Activated T-helper 1 cell treated with anti-CD3 and anti-CD28 coated beads, Interleukin-12 subunit alpha, Interleukin-12 subunit beta, Interleukin-2, Interleukin-4 antibody, amounts not matched to agents 30 ng/mL and 10 ng/mL and 1 ng/mL, durations not matched to agents 14 hours and 24 hours and 36 hours (primary cell): ENCODE measurements at regions of chr2 and their contacts with region 1.

Region 1: DNA sequence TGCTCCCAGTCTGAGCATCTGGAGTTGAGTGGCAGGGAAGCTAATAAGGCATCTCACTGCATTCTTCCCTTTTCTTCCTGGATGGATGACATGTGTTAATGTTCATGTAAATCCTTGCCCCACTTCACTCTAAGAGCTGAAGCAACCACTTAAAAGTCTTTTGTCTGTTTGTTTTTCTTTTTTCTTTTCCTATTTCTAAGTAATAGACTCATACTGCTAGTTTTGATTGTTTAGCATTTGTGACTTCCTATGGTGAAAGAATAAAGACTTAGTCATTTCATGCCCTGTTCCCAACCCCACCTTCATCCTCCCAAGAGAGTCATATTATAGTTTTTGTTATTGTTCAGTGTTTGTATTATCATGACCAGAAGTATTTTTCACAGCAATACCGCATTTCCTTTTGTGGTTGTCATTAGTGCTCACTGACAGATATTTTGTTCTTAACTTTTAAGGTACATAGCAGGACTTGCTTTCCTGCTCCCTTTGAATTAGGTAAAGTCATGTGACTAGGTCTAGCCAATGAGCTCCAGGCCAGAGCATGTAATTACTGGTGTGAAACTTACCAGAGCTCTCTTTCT is 18.1 kb upstream of the SPP2 start:
- DNase-seq: peak; percentile 24
- H3K4me3 Mint-ChIP-seq: no peak overlapping the region
- H3K27ac Mint-ChIP-seq: peak overlapping the region; percentile 20
- H3K4me1 Mint-ChIP-seq: peaks cover 27% of the 10 kb centered on the region
- H3K27me3 Mint-ChIP-seq: peaks cover 14% of the 10 kb centered on the region

Region 2: DNA sequence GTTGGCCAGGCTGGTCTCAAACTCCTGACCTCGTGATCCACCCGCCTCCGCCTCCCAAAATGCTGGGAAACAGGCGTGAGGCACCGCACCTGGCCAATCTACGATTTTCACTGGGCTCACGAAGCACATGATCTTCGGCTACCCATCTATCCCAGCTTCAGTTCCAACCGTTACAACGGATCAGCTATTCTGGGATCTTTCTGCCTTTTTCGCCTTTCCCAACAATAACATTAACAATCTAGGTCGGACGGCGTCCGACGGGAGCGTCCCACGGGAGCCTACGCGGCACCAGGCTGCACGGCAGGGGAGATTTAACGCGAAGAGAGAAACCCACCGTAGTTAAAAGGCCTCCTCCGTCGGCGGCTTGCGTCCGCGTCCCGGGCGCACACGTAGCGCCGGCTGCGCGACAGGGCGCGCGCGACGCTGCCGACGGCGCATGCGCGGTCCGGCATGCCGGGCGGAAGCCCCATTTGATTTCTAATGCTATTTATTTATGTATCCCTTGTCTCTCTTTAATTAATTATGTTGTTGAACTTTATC is 164.3 kb before region 1 on chr2 and contains the start of gene MSL3B:
- intact Hi-C with region 1: loop called (anchors 10 kb)
- DNase-seq: peak; percentile 55
- H3K4me3 Mint-ChIP-seq: peak within 1 kb of the TSS; percentile 93
- H3K27ac Mint-ChIP-seq: peak within 1 kb of the TSS; percentile 92
- H3K4me1 Mint-ChIP-seq: peaks cover 24% of the 10 kb centered on the region
- H3K27me3 Mint-ChIP-seq: peaks cover 27% of the 10 kb centered on the region

Region 3: DNA sequence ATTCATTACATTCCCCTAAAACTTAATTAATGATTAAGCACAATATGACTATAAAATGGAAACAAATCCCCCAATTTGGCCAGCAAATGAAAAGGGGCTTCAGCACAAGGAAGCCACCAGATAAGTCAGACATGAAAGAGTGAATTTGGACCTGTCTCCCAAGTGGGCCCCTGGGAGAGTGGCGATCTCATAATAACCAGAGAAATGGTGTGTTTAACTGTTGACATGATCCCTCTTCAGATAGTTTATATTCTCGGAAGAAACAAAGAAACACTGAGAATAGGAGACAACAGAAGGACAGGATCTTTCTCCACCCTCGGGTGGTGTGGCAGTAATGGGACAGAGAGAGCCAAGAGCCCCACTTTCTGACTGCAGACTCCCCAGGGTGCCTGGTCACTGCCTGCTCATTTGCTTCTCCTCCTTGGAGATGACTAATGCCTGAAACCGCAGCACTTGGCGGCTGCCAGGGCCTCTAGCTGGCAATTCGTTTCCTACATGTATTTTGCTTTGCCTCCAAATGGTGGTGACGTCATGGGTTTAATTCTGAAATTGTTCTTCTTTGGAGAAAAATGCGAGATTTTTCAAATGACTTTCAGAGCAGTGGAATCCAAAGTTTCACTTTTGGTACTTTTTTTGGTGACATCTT is 28.3 kb before region 1 on chr2:
- intact Hi-C with region 1: loop called (anchors 1 kb)
- DNase-seq: no peak
- H3K4me3 Mint-ChIP-seq: no peak overlapping the region
- H3K27ac Mint-ChIP-seq: no peak overlapping the region
- H3K4me1 Mint-ChIP-seq: peaks cover 13% of the 10 kb centered on the region
- H3K27me3 Mint-ChIP-seq: peaks cover 30% of the 10 kb centered on the region

Region 4: GRCh38 chr2:234278556-234279255 is 246.3 kb after region 1 on chr2:
- intact Hi-C with region 1: loop called (anchors 1 kb)
- DNase-seq: peak; percentile 35
- H3K4me3 Mint-ChIP-seq: peak overlapping the region; percentile 44
- H3K27ac Mint-ChIP-seq: peak overlapping the region; percentile 82
- H3K4me1 Mint-ChIP-seq: peaks cover 81% of the 10 kb centered on the region
- H3K27me3 Mint-ChIP-seq: no peaks in the 10 kb centered on the region